Cardiac septum (tissue), 1 donor: ENCODE measurements at regions of chr2 and their contacts with region 1.

Region 1: DNA sequence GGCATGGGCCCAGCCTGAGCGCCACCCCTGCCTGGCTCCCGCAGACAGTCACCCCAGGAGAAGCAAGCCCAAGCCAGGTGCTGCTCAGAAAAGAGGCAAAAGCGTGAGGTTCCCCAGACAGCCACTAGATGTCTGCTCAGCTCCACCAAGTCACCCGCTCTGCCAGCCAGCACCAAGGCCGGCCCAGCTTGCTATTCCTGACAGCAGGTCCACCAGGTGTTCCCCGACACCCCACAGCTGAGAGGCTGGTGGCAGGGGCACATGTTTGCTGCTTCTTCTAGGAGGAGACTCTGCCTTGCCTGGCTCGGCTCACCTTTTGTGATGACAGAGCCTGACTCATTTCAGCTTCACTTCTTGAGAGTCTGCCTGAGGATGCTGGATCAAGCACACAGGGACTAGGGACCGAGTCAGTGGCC is 206.7 kb downstream of the MGAT5 start:
- DNase-seq: peak; percentile 78

Region 2: GRCh38 chr2:134375935-134376334 is 84.7 kb before region 1 on chr2:
- intact Hi-C with region 1: loop called (anchors 10 kb)
- DNase-seq: no peak

Region 3: DNA sequence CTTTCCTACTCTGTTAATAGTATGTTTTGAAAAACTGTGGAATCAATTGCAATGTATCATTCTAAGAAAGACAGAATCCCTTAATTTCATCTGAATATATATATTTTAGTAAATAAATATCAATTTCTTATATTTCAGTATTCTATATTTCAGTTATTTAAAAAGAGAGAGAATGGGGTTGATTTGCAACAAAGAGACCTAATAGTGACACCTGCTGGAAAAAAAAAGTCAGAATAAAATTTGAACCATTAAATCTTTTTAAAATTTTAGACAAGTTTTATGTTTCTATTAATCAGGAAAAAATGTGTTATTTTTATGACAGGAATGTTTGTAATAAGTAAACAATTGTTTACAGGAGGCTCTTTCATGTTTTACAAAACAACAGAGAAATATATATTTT is 437.3 kb after region 1 on chr2:
- intact Hi-C with region 1: loop called (anchors 2 kb)
- DNase-seq: no peak